Naive thymus-derived CD4-positive, alpha-beta T cell (primary cell): ENCODE measurements at regions of chr12 and their contacts with region 1.

Region 1: DNA sequence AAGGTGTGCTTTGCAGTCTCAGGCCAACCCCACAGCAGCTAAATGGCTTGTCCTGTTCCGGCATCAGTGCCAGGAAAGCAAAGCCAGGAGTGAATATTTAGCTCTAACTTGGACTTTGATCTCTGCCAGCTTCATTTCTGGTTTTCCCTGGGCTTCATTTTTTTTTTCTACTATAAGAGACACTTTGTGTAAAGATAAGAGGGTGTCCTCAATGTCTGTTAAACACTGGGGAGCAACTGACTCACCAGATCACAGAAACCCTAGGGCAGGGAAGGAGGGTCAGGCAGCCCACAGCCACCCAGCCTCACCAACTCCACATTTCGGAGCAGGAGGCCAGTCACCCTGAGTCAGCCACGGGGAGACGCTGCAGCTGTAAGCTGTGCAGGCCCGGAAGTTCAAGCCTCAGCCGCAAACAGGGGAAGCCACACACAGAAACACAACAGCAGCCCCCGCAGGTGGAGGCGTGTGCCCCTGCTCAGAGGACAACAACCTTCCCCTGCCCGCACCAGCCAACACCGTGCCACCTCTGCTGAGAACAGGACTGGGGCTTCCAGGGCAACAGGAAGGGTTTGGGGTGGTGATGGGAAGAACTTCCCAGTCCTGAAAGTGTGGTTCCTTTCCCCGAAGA is 6.3 kb downstream of the TNFRSF1A start:
- DNase-seq: peak; percentile 56 to 85 (median 81)
- ATAC-seq: peak; percentile 82
- H3K4me3 ChIP-seq: peak overlapping the region; percentile 88
- H3K4me3 Mint-ChIP-seq: no peak overlapping the region
- H3K27ac ChIP-seq: peak overlapping the region; percentile 92
- H3K27ac Mint-ChIP-seq: no peak overlapping the region
- H3K4me1 ChIP-seq: peaks cover 58 to 67% of the 10 kb centered on the region in 2 donors
- H3K4me1 Mint-ChIP-seq: peaks cover 4 to 44% (median 36%) of the 10 kb centered on the region in 7 donors
- H3K27me3 ChIP-seq: no peaks in the 10 kb centered on the region
- H3K27me3 Mint-ChIP-seq: no peaks in the 10 kb centered on the region

Region 2: DNA sequence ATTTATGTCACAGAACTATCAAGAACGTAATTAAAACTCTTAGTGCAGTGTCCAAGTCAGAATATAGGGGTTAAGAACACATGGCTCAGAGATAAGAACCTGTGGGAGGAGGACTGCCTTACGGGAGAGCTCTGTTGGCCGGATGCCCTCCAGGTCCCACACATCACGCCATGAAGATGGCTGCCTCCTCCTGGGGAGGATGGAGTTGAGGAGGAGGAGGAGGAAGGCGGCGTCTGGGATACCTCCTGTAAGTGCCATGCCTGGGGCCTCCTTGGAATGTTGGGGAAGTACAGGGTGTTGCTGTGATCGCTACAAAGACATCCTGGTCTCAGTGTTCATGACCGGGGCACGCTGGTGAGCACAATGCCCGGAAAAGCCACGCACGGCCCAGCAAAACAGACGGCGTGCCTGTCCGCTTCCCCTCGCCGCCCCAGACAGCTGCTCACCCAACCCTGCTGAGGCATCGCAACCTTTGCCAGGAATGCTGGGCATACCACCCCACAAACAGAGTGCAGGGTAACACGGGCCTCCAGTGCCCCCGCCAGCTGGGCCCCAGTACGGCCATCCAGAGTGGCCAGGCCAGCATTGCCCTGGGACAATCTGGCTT is 164.1 kb before region 1 on chr12:
- CTCF ChIA-PET with region 1: no interaction called
- POLR2A ChIA-PET with region 1: no interaction called
- intact Hi-C with region 1: no loop called
- DNase-seq: no peak
- ATAC-seq: no peak
- H3K4me3 ChIP-seq: no peak overlapping the region
- H3K4me3 Mint-ChIP-seq: no peak overlapping the region
- H3K27ac ChIP-seq: no peak overlapping the region
- H3K27ac Mint-ChIP-seq: no peak overlapping the region
- H3K4me1 ChIP-seq: peaks cover 0 to 25% of the 10 kb centered on the region in 2 donors
- H3K4me1 Mint-ChIP-seq: peaks cover 22 to 36% (median 33%) of the 10 kb centered on the region in 7 donors
- H3K27me3 ChIP-seq: no peaks in the 10 kb centered on the region
- H3K27me3 Mint-ChIP-seq: peaks cover 0 to 10% (median 0%) of the 10 kb centered on the region in 5 donors

Region 3: DNA sequence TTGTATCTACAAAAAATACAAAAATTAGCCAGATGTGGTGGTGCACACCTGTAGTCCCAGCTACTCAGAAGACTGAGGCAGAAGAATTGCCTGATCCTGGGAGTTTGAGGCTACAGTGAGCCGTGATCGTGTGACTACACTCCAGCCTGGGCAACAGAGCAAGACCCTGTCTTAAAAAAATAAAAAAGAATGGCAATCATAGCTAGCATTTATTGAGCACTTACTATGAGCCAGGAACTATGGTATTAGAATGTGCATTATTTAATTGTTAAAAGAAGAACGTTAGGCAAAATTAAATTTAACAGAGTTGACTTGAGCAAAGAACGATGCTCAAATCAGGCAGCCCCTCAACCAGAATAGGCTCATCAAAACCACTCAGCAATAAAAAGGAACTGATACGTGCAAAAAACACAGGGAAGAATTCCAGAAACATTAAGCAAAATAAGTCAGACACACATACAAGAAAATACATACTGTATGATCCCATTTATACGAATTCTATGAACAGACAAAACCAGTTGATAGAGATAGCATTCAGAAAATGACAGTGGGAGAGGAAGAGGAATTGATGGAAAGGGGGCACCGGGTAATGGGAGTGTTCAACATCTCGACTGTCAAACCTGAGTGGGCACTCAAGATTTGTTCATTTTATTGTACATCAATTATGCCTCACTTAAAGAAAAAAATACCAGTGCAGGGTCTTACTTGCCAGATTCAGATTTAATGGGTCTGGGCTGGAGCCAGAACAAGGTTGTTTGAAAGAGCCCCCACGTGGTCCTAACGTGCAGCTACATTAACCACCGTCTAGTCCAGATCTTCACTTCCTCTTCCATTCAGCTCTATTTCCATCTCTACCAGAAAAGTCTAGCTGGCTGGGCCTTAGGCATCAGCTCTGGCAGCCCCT is 31.8 kb after region 1 on chr12:
- CTCF ChIA-PET with region 1: interaction called, 139 read pairs
- POLR2A ChIA-PET with region 1: interaction called, 342 read pairs
- intact Hi-C with region 1: loop called (anchors 1 kb)
- DNase-seq: peak in 5 of 9 donors; percentile 27 to 57 (median 53)
- ATAC-seq: peak; percentile 70
- H3K4me3 ChIP-seq: no peak overlapping the region
- H3K4me3 Mint-ChIP-seq: peak overlapping the region in 2 of 10 donors; percentile 12 to 19
- H3K27ac ChIP-seq: no peak overlapping the region
- H3K27ac Mint-ChIP-seq: peak overlapping the region in 8 of 9 donors; percentile 14 to 91 (median 70)
- H3K4me1 ChIP-seq: peaks cover 0 to 4% of the 10 kb centered on the region in 2 donors
- H3K4me1 Mint-ChIP-seq: peaks cover 18 to 38% (median 35%) of the 10 kb centered on the region in 7 donors
- H3K27me3 ChIP-seq: no peaks in the 10 kb centered on the region
- H3K27me3 Mint-ChIP-seq: no peaks in the 10 kb centered on the region

Region 4: DNA sequence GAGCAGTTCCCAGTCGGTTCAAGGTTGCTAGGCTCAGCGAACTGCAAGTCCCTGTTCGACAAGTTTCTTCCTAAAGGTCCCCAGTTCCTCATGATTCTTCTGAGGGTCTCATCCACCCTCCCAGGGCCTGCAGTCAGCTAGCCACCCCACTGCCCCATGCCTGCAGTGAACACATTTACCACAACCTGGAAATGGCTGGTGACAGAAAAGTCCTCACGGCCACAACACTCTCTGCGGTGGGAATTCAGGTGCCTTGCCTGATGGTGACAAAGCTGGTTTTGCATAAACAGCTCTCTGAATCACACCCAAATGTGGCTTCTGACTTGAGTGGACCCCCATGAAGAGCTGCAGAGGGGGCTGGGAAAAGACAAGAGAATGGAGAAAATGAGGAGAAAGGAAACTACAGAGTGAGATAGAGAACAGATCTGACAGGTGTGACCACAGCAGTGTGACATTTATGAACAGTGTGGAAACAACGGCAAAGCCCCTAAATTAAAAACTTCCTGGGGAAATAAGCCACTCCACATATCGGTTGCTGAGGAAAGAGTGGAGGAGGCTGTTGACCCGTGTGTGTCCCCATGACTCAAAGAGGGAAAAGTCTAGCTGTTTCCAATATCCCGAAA is 107.9 kb after region 1 on chr12:
- CTCF ChIA-PET with region 1: interaction called, 9 read pairs
- POLR2A ChIA-PET with region 1: interaction called, 33 read pairs
- intact Hi-C with region 1: no loop called
- DNase-seq: no peak
- ATAC-seq: no peak
- H3K4me3 ChIP-seq: peak overlapping the region; percentile 19
- H3K4me3 Mint-ChIP-seq: peak overlapping the region; percentile 95 to 100 (median 100)
- H3K27ac ChIP-seq: peak overlapping the region; percentile 87
- H3K27ac Mint-ChIP-seq: peak overlapping the region; percentile 92 to 100 (median 95)
- H3K4me1 ChIP-seq: peaks cover 25 to 32% of the 10 kb centered on the region in 2 donors
- H3K4me1 Mint-ChIP-seq: peaks cover 22 to 63% (median 53%) of the 10 kb centered on the region in 7 donors
- H3K27me3 ChIP-seq: no peaks in the 10 kb centered on the region
- H3K27me3 Mint-ChIP-seq: no peaks in the 10 kb centered on the region

Region 5: DNA sequence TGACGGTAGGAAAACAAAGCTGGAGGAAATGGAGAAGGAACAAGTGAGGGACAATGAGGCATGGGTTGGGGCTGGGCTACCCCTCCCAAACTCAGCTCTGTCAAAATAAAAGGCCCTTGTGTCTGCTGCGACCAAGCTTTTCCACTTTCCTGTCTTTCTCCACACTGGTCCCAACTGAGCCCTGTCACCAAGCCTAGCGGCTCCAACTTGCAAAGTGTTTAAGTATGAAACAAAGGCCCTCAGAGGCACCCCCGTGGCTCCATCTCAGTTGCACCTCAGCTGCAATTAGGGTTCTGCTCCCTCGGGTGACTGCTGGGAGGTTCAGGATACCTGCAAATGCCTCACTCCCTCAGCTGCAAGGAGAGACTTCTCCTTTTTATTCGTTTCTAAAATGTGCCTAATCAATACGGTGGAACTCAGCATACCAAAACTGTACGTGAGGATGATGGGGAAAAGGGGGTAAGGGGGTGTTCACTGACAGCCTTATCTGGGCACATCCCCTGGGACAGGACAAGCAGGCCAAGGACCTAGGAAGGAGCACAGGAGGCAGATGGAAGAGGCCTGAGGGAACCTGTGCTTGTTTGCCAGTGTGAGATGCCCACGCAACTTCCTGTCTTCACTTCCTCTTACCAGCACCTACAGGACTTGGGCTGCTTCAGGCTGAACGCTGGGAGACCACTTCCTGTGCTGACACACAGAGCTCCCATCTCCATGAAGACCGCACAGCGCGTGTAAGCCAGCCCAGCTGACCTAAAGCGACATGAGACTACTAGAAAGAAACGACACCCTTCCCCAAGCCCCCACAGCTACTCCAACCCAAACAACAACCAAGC is 126.1 kb after region 1 on chr12:
- CTCF ChIA-PET with region 1: interaction called, 47 read pairs
- POLR2A ChIA-PET with region 1: interaction called, 31 read pairs
- intact Hi-C with region 1: loop called (anchors 1 kb)
- DNase-seq: peak; percentile 41 to 91 (median 87)
- ATAC-seq: peak; percentile 93
- H3K4me3 ChIP-seq: peak overlapping the region; percentile 54
- H3K4me3 Mint-ChIP-seq: peak overlapping the region; percentile 74 to 89 (median 85)
- H3K27ac ChIP-seq: peak overlapping the region; percentile 93
- H3K27ac Mint-ChIP-seq: peak overlapping the region; percentile 95 to 99 (median 98)
- H3K4me1 ChIP-seq: peaks cover 59 to 81% of the 10 kb centered on the region in 2 donors
- H3K4me1 Mint-ChIP-seq: peaks cover 66 to 95% (median 87%) of the 10 kb centered on the region in 7 donors
- H3K27me3 ChIP-seq: no peaks in the 10 kb centered on the region
- H3K27me3 Mint-ChIP-seq: no peaks in the 10 kb centered on the region

Region 6: DNA sequence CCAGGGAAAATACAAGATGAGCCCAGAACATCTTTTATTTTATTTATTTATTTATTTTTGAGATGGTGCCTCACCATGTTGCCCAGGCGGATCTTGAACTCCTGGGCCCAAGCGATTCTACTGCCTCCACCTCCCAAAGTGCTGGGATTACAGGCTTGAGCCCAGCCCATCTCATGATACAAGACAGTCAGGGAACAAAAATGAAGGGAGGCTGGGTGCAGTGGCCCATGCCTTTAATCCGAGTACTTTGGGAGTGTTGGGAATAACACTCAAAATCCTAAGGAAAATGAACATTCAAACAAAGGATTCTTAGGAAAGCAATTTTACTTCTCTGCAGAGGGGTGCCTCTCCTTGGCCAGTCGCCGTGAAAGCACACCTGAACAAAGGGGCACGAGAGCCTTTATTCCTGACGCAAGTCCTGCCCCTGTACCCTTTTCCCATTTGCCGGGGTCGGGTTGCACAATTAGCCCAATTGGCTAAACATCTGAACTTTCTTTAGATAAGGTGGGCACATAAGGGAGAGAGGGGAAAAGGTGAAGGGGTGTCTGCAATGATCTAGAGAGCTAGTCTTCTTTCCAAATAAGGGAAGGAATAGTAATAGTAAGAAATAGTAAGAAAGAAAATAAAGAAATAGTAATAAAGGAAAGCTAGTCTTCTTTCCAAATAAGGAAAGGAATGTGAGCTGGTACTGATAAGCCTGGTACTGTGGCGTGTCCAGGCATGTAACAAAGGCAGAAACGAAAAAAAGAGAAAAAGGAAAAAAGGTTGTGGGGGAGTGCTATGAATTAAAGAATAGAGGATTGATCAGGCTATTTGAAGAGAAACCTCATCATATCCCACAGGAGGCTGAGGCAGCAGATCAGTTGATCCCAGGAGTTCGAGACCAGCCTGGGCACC is 171.8 kb after region 1 on chr12:
- CTCF ChIA-PET with region 1: no interaction called
- POLR2A ChIA-PET with region 1: no interaction called
- intact Hi-C with region 1: no loop called
- DNase-seq: no peak
- ATAC-seq: no peak
- H3K4me3 ChIP-seq: no peak overlapping the region
- H3K4me3 Mint-ChIP-seq: no peak overlapping the region
- H3K27ac ChIP-seq: no peak overlapping the region
- H3K27ac Mint-ChIP-seq: peak overlapping the region in 1 of 9 donors; percentile 52
- H3K4me1 ChIP-seq: no peaks in the 10 kb centered on the region
- H3K4me1 Mint-ChIP-seq: peaks cover 0 to 21% (median 6%) of the 10 kb centered on the region in 7 donors
- H3K27me3 ChIP-seq: no peaks in the 10 kb centered on the region
- H3K27me3 Mint-ChIP-seq: no peaks in the 10 kb centered on the region

Region 7: GRCh38 chr12:6533923-6534694 is 198.5 kb after region 1 on chr12 and contains the start of gene GAPDH:
- CTCF ChIA-PET with region 1: interaction called, 8 read pairs
- POLR2A ChIA-PET with region 1: interaction called, 26 read pairs
- intact Hi-C with region 1: loop called (anchors 1 kb)
- DNase-seq: peak; percentile 66 to 94 (median 83)
- ATAC-seq: peak; percentile 66
- H3K4me3 ChIP-seq: peak within 1 kb of the TSS; percentile 97
- H3K4me3 Mint-ChIP-seq: peak within 1 kb of the TSS; percentile 90 to 99 (median 94)
- H3K27ac ChIP-seq: peak within 1 kb of the TSS; percentile 81
- H3K27ac Mint-ChIP-seq: peak within 1 kb of the TSS; percentile 92 to 100 (median 94)
- H3K4me1 ChIP-seq: peaks cover 31 to 43% of the 10 kb centered on the region in 2 donors
- H3K4me1 Mint-ChIP-seq: peaks cover 28 to 59% (median 42%) of the 10 kb centered on the region in 7 donors
- H3K27me3 ChIP-seq: no peaks in the 10 kb centered on the region
- H3K27me3 Mint-ChIP-seq: peaks cover 0 to 2% (median 0%) of the 10 kb centered on the region in 5 donors
- total RNA-seq, gene GAPDH: 330 to 4,503 (median 379) TPM

Region 8: DNA sequence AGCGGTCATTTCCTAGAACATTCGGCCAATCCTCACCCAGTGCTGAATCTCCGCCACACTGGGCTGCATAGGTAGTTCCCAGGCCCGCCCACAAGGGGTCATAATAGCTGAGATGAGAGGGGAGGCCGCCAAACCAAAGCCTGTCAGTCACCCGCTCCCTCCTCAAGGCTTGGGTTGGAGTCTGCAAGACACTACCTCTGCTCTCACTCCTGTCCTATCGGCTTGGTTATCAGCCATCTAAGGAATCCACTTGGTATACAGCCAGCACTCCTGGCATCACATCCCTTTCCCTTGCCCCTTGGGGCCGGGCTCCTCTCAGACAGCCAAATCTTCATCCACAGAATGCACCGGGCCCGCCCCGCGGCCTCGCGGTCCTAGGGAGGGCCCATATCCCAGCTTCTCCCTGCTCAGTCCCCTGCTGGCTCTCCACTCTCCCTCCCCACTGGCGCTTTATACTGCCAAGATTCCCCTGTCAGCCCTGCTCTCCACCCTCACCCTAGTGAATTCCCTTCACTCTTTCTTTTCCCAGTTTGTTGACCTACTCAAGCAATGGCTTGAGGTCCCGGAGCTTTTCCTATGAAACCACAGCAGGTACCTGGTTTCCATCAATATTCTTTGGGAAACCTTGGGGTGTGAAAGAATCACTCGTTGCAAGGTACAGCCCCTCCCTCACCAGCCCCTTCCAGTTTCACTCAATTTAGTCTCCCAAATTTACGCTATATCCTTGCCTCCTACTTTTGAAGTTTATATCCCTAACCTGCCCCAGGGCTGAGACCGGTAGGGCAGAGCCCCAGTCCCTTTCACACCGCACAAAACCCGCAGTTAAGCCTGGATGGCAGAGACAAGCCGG is 218.8 kb after region 1 on chr12:
- CTCF ChIA-PET with region 1: interaction called, 4 read pairs
- POLR2A ChIA-PET with region 1: interaction called, 6 read pairs
- intact Hi-C with region 1: loop called (anchors 5 kb)
- DNase-seq: peak; percentile 38 to 57 (median 52)
- ATAC-seq: peak; percentile 67
- H3K4me3 ChIP-seq: peak overlapping the region; percentile 92
- H3K4me3 Mint-ChIP-seq: peak overlapping the region; percentile 80 to 96 (median 90)
- H3K27ac ChIP-seq: peak overlapping the region; percentile 71
- H3K27ac Mint-ChIP-seq: peak overlapping the region; percentile 14 to 88 (median 55)
- H3K4me1 ChIP-seq: peaks cover 26 to 29% of the 10 kb centered on the region in 2 donors
- H3K4me1 Mint-ChIP-seq: peaks cover 39 to 62% (median 56%) of the 10 kb centered on the region in 7 donors
- H3K27me3 ChIP-seq: no peaks in the 10 kb centered on the region
- H3K27me3 Mint-ChIP-seq: no peaks in the 10 kb centered on the region